Activated T-helper 1 cell treated with anti-CD3 and anti-CD28 coated beads, Interleukin-12 subunit alpha, Interleukin-12 subunit beta, Interleukin-2, Interleukin-4 antibody, amounts not matched to agents 30 ng/mL and 10 ng/mL and 1 ng/mL, durations not matched to agents 14 hours and 24 hours and 36 hours (primary cell): ENCODE measurements at regions of chr3 and their contacts with region 1.

Region 1: DNA sequence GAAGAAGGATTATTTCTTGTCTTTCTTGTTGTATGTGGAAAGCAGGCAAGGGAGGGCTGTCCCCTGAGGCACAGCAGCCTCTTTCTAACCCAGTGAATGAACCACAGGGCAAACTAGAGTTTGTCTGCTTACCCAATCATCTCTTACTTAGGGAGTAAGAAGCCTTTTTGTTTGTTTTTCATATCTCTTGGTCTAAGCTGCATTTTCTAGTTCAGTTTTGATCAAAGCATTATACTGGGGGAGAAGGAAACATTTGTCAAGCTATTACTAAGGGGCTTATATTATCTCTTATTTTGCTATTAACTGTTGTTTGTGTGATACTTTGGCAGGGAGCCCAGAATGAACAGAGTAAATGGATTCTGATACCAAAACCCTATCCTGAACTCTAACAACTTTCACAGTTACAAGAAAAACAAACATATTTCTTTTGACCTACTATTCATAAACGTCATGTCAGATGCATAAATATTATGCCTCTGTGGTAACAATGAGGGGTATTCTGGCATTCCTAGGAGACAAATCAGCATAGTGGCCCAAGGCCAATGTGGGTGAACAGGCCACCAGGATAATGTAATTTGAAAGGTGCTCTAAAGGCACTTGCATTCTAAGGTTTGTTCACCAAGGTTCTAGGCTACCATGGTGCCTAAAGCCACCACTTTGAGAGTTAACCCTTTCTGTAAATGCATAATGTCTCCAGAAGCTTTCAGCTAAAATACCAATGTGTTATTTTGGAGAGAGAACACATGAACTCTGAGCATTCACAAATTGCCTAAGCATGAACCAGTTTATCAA is 271.6 kb upstream of the ZPLD1 start:
- DNase-seq: no peak
- H3K4me3 Mint-ChIP-seq: no peak overlapping the region
- H3K27ac Mint-ChIP-seq: no peak overlapping the region
- H3K4me1 Mint-ChIP-seq: peaks cover 17% of the 10 kb centered on the region
- H3K27me3 Mint-ChIP-seq: no peaks in the 10 kb centered on the region

Region 2: DNA sequence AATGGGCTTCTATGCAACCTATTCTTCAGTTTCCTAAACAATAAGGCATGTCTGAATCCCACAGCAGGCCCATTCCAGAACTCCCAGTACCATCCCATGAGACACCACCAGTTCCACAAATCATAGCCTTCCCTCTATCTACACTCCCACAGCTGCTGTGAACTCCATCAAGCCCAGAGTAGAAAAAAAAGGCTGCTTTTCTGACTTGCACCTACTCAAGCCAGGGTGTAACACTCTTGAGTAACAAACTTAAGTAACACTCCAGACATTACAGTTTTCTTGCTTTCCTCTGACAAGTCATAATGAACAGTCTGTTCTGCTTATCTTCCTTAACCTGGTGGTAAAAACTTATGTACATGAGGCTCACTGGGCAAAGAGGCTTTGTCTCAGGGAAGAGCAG is 30.9 kb before region 1 on chr3:
- intact Hi-C with region 1: loop called (anchors 2 kb)
- DNase-seq: no peak
- H3K4me3 Mint-ChIP-seq: no peak overlapping the region
- H3K27ac Mint-ChIP-seq: no peak overlapping the region
- H3K4me1 Mint-ChIP-seq: peaks cover 42% of the 10 kb centered on the region
- H3K27me3 Mint-ChIP-seq: no peaks in the 10 kb centered on the region